Activated CD4-positive, alpha-beta T cell treated with anti-CD3 and anti-CD28 coated beads, Interleukin-2, amount 10 ng/mL, durations not matched to agents 24 days and 14 days (primary cell): ENCODE measurements at regions of chr4 and their contacts with region 1.

Region 1: GRCh38 chr4:73311428-73311827 is 52.8 kb upstream of the ANKRD17 start:
- DNase-seq: no peak
- H3K4me3 Mint-ChIP-seq: no peak overlapping the region
- H3K27ac Mint-ChIP-seq: no peak overlapping the region
- H3K4me1 Mint-ChIP-seq: no peaks in the 10 kb centered on the region
- H3K27me3 Mint-ChIP-seq: peaks cover 1% of the 10 kb centered on the region

Region 2: GRCh38 chr4:73172161-73172560 is 139.3 kb before region 1 on chr4:
- intact Hi-C with region 1: no loop called
- DNase-seq: no peak
- H3K4me3 Mint-ChIP-seq: no peak overlapping the region
- H3K27ac Mint-ChIP-seq: no peak overlapping the region
- H3K4me1 Mint-ChIP-seq: peaks cover 25% of the 10 kb centered on the region
- H3K27me3 Mint-ChIP-seq: no peaks in the 10 kb centered on the region

Region 3: GRCh38 chr4:73251384-73251783 is 60.0 kb before region 1 on chr4:
- intact Hi-C with region 1: no loop called
- DNase-seq: no peak
- H3K4me3 Mint-ChIP-seq: no peak overlapping the region
- H3K27ac Mint-ChIP-seq: no peak overlapping the region
- H3K4me1 Mint-ChIP-seq: peaks cover 37% of the 10 kb centered on the region
- H3K27me3 Mint-ChIP-seq: no peaks in the 10 kb centered on the region

Region 4: DNA sequence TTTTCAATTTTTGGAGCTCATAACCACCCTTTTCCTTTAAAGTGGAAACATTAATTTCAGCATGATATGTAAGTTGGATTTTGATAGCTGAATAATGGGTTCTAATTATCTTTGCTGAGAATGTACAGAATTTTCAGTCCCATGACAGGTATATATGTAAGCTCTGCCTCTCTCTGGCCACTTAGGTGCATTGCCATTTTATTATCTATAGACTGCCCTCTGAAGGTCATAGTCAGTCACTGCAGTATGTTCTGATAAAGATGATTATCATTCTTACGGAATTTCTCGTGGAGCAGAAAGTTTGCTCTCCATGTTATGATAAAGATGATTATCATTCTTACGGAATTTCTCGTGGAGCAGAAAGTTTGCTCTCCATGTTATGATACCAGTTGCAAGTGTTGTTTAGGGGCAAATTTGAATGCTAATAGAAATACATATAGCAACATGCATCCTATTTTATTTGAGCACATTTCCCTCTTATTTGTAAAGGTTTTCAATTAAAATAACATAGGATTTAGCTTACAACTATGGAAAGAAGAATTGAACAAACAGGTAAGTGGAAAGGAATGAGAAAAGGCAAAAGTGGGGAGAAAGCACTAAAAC is 135.0 kb after region 1 on chr4:
- intact Hi-C with region 1: loop called (anchors 1 kb)
- DNase-seq: peak; percentile 62
- H3K4me3 Mint-ChIP-seq: no peak overlapping the region
- H3K27ac Mint-ChIP-seq: no peak overlapping the region
- H3K4me1 Mint-ChIP-seq: no peaks in the 10 kb centered on the region
- H3K27me3 Mint-ChIP-seq: peaks cover 9% of the 10 kb centered on the region